ENCODE measurements at regions of chr11 and their contacts with region 1.

Region 1: DNA sequence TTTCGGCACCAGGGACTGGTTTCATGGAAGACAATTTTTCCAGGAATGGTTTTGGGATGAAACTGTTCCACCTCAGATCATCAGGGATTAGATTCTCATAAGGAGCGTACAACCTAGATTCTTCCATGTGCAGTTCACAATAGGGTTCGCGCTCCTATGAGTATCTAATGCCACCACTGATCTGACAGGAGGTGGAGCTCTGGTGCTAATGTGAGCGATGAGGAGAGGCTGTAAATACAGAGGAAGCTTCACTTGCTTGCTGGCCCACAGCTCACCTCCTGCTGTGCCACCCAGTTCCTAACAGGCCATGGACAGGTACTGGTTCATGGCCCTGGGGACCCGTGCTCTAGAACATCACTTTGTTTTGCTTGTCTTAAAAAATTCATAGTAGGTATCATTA is 41.8 kb upstream of the AMPD3 start:
- DNase-seq: peak; percentile 72
- ATAC-seq: peak; percentile 93
- H3K4me3 Mint-ChIP-seq: no peak overlapping the region
- H3K27ac Mint-ChIP-seq: no peak overlapping the region
- H3K4me1 Mint-ChIP-seq: peaks cover 28% of the 10 kb centered on the region
- H3K27me3 Mint-ChIP-seq: no peaks in the 10 kb centered on the region
- CTCF ChIP-seq: peak; percentile 58

Region 2: DNA sequence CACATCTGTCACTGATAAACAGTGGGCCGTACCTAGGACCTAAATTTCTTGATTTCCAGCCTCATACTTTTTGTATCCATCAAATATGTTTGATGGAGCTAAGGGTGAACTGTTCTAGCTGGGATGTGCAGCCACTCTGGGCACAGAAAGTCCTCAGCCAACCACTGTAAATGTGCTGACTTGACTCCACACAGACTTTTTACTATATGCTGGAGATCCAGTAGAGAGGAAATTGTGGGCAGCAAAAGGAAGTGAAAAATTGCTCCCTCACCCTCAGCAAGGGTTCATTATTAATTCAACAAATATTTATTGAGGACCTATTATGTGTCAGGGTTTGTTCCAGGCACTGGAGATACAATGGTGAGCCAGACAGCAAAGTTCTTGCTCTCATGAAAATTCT is 12.4 kb before region 1 on chr11:
- CTCF ChIA-PET with region 1: interaction called, 12 read pairs
- POLR2A ChIA-PET with region 1: interaction called, 3 read pairs
- intact Hi-C with region 1: no loop called
- DNase-seq: no peak
- ATAC-seq: no peak
- H3K4me3 Mint-ChIP-seq: no peak overlapping the region
- H3K27ac Mint-ChIP-seq: no peak overlapping the region
- H3K4me1 Mint-ChIP-seq: peaks cover 5% of the 10 kb centered on the region
- H3K27me3 Mint-ChIP-seq: peaks cover 2% of the 10 kb centered on the region
- CTCF ChIP-seq: no peak

Region 3: DNA sequence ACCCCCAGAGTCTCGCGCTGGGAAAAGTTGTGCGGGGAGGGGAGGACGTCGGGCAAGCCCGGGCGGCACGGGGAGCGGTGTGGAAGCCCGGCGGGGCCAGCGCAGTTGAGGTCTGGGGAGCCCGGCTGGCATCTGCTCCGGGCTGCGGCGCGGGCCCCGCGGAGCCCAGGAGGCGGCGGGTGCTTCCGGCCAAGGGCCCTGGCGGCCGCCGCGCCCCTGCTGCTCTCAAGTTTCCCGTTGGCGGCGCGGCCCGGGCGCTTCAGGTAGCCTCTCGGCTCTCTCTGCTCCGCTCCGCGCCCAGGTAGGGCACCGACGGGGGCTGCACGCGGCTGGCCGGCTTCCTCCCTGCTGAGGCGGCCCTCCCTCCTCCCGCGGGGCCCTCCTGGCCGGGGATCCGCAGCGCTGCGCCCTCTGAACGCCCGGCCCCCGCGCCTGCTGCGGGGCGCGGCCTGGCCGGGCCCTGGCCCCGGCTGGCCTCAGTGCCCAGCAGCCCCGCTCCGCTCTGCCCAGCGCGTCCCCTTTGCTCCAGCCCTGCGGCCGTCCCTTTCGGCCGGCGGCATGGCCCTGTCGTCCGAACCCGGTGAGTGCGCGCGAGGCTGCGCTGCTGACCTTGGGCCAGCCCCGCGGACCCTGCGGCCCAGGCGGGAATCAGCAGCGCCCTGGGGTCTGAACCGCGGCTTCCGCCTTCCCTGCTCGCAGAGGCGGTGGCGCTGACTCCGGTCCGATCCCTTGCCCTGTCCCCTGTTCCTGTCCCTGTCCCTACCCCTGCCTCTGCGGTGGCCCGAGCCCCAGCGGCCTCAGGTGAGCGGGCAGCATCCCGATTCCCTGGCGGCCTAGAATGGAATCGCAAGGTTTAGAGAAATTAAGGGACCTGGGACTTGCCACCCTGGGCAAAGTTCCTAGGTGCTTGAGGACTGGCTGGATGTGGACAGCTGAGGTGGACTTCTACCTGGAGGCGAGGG is 37.5 kb after region 1 on chr11:
- CTCF ChIA-PET with region 1: interaction called, 26 read pairs
- POLR2A ChIA-PET with region 1: no interaction called
- intact Hi-C with region 1: no loop called
- DNase-seq: peak; percentile 66
- ATAC-seq: peak; percentile 38
- H3K4me3 Mint-ChIP-seq: peak overlapping the region; percentile 77
- H3K27ac Mint-ChIP-seq: peak overlapping the region; percentile 91
- H3K4me1 Mint-ChIP-seq: peaks cover 64% of the 10 kb centered on the region
- H3K27me3 Mint-ChIP-seq: no peaks in the 10 kb centered on the region
- CTCF ChIP-seq: peak; percentile 65

Region 4: GRCh38 chr11:10526974-10527918 is 114.0 kb after region 1 on chr11:
- CTCF ChIA-PET with region 1: interaction called, 3 read pairs
- POLR2A ChIA-PET with region 1: no interaction called
- intact Hi-C with region 1: loop called (anchors 10 kb)
- DNase-seq: peak; percentile 15
- ATAC-seq: peak; percentile 97
- H3K4me3 Mint-ChIP-seq: peak overlapping the region; percentile 3
- H3K27ac Mint-ChIP-seq: peak overlapping the region; percentile 80
- H3K4me1 Mint-ChIP-seq: peaks cover 20% of the 10 kb centered on the region
- H3K27me3 Mint-ChIP-seq: no peaks in the 10 kb centered on the region
- CTCF ChIP-seq: no peak

Region 5: DNA sequence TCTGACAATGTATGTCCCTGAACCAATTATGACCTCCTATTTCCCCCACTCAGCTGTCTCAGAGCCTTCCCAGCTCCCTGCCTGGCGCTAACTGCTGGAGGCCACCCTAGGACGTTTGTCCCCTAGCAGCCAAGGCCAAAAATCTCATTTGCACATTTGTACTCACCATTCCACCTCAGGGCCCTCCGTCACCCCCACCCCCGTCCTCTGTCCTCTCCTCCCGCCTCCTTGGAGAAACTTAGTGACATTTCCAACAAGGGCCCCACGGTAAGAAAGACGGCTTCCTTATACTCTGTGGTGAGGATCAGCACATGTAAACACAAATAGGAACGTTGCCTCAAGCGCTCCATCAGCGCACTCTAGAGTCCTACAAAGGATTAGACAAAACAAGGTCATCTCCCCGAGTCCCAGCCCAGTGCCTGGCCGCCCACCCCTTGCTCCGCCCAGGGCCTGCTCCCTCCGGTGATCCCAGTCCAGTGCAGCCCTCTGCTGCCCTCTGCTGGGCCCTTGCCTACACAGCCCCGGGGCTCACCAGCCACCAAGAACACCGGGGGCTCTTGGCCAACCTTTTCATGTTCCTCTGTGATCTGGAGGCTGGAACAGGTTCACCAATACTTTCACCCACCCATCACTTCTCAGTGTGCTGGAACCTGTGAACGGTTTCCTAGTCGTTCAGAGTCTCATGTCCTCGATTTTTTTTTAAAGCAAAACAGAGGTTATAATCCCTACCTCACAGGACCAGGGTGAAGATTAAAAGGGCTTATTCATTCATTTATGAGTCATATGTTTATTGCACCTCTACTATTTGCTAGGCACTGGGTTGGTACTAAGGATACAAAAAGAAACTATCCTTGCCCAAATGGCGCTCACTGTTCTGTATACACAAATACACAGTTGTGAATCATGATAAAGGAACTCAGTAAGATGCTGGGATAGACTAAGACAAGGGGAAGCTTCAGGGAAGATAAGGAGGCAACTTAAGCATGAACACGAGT is 322.5 kb after region 1 on chr11:
- CTCF ChIA-PET with region 1: interaction called, 31 read pairs
- POLR2A ChIA-PET with region 1: no interaction called
- intact Hi-C with region 1: loop called (anchors 1 kb)
- DNase-seq: peak; percentile 96
- ATAC-seq: peak; percentile 100
- H3K4me3 Mint-ChIP-seq: no peak overlapping the region
- H3K27ac Mint-ChIP-seq: no peak overlapping the region
- H3K4me1 Mint-ChIP-seq: peaks cover 9% of the 10 kb centered on the region
- H3K27me3 Mint-ChIP-seq: peaks cover 1% of the 10 kb centered on the region
- CTCF ChIP-seq: peak; percentile 92

Measured in activated CD8-positive, alpha-beta T cell treated with anti-CD3 and anti-CD28 coated beads for 36 hours (primary cell).